GM12878 (cell line): ENCODE measurements at regions of chr20 and their contacts with region 1.

Region 1: GRCh38 chr20:50913690-50914375 is 17.4 kb downstream of the ADNP start:
- DNase-seq: no peak
- ATAC-seq: peak; percentile 56
- H3K4me3 ChIP-seq: no peak overlapping the region
- H3K27ac ChIP-seq: no peak overlapping the region
- H3K4me1 ChIP-seq: peaks cover 76% of the 10 kb centered on the region
- H3K27me3 ChIP-seq: no peaks in the 10 kb centered on the region
- CTCF ChIP-seq: no peak
- EP300 ChIP-seq: no peak
- POLR2A ChIP-seq: no peak
- RAD21 ChIP-seq: no peak

Region 2: GRCh38 chr20:50870561-50871161 is 43.2 kb before region 1 on chr20:
- CTCF ChIA-PET with region 1: no interaction called
- POLR2A ChIA-PET with region 1: no interaction called
- RAD21 ChIA-PET with region 1: no interaction called
- SMC1A ChIA-PET with region 1: no interaction called
- in situ Hi-C with region 1: no loop called
- intact Hi-C with region 1: no loop called
- DNase-seq: no peak
- ATAC-seq: no peak
- H3K4me3 ChIP-seq: no peak overlapping the region
- H3K27ac ChIP-seq: no peak overlapping the region
- H3K4me1 ChIP-seq: no peaks in the 10 kb centered on the region
- H3K27me3 ChIP-seq: no peaks in the 10 kb centered on the region
- CTCF ChIP-seq: no peak
- EP300 ChIP-seq: no peak
- POLR2A ChIP-seq: no peak
- RAD21 ChIP-seq: no peak

Region 3: DNA sequence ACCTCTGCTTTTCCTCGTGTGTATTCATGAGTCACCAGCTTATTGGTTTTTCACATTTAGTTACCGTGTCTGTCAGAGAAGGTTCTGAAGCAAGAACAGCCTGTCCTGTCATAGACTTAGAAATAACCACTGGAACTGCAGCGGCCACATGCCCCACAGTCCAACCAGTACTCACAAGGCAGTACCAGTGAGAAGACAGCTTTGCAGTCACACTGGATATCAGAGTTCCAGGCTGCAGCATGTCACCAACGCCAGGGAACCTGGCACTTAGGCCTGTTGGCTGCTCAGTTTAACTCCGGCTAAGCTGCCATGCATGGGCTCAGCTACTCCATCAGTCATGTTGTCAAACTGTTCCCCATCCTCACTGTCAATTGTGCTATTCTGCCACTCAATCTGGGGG is 22.7 kb before region 1 on chr20:
- CTCF ChIA-PET with region 1: interaction called, 4 read pairs
- POLR2A ChIA-PET with region 1: interaction called, 4 read pairs
- RAD21 ChIA-PET with region 1: interaction called, 8 read pairs
- SMC1A ChIA-PET with region 1: interaction called, 11 read pairs
- in situ Hi-C with region 1: no loop called
- intact Hi-C with region 1: no loop called
- DNase-seq: no peak
- ATAC-seq: no peak; the same call in 2 of the 3 replicates
- H3K4me3 ChIP-seq: no peak overlapping the region
- H3K27ac ChIP-seq: no peak overlapping the region
- H3K4me1 ChIP-seq: no peaks in the 10 kb centered on the region
- H3K27me3 ChIP-seq: no peaks in the 10 kb centered on the region
- CTCF ChIP-seq: no peak
- EP300 ChIP-seq: no peak
- POLR2A ChIP-seq: peak; percentile 77
- RAD21 ChIP-seq: no peak

Region 4: DNA sequence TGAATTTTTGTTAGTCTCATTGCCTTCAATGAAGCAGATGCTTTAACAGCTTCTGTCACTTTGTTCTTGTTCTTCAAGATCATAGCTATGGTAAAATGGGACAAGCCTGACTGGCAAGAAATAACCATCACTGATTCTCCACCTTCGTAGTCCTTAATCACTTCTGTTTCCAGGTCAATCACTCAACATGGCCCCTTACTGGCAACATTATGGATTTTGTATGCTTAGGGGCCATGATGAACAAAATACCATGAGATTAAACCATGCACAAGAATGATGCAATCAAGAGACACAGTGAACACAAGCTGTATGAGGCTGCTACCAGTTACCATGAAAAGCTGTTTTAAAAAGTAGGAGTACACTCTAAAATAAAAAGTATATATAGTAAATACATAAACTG is 15.4 kb before region 1 on chr20:
- CTCF ChIA-PET with region 1: interaction called, 5 read pairs
- POLR2A ChIA-PET with region 1: interaction called, 12 read pairs
- RAD21 ChIA-PET with region 1: interaction called, 8 read pairs
- SMC1A ChIA-PET with region 1: interaction called, 11 read pairs
- in situ Hi-C with region 1: no loop called
- intact Hi-C with region 1: no loop called
- DNase-seq: no peak
- ATAC-seq: no peak
- H3K4me3 ChIP-seq: no peak overlapping the region
- H3K27ac ChIP-seq: no peak overlapping the region
- H3K4me1 ChIP-seq: no peaks in the 10 kb centered on the region
- H3K27me3 ChIP-seq: no peaks in the 10 kb centered on the region
- CTCF ChIP-seq: no peak
- EP300 ChIP-seq: no peak
- POLR2A ChIP-seq: no peak
- RAD21 ChIP-seq: no peak

Region 5: GRCh38 chr20:50903353-50904051 is 10.3 kb before region 1 on chr20:
- CTCF ChIA-PET with region 1: interaction called, 5 read pairs
- POLR2A ChIA-PET with region 1: interaction called, 12 read pairs
- RAD21 ChIA-PET with region 1: interaction called, 7 read pairs
- SMC1A ChIA-PET with region 1: interaction called, 10 read pairs
- in situ Hi-C with region 1: no loop called
- intact Hi-C with region 1: no loop called
- DNase-seq: no peak
- ATAC-seq: no peak
- H3K4me3 ChIP-seq: no peak overlapping the region
- H3K27ac ChIP-seq: no peak overlapping the region
- H3K4me1 ChIP-seq: no peaks in the 10 kb centered on the region
- H3K27me3 ChIP-seq: no peaks in the 10 kb centered on the region
- CTCF ChIP-seq: no peak
- EP300 ChIP-seq: no peak
- POLR2A ChIP-seq: no peak
- RAD21 ChIP-seq: no peak